Aorta (tissue), 5 donors: ENCODE measurements at regions of chr11 and their contacts with region 1.

Region 1: GRCh38 chr11:14942745-14943144 is 29.4 kb downstream of the CALCA start:
- DNase-seq: no peak
- ATAC-seq: no peak
- H3K4me3 ChIP-seq: no peak overlapping the region
- H3K27ac ChIP-seq: no peak overlapping the region
- H3K4me1 ChIP-seq: no peaks in the 10 kb centered on the region
- H3K27me3 ChIP-seq: no peaks in the 10 kb centered on the region

Region 2: GRCh38 chr11:14852571-14853177 is 90.1 kb before region 1 on chr11:
- intact Hi-C with region 1: no loop called
- DNase-seq: no peak
- ATAC-seq: no peak
- H3K4me3 ChIP-seq: no peak overlapping the region
- H3K27ac ChIP-seq: no peak overlapping the region
- H3K4me1 ChIP-seq: no peaks in the 10 kb centered on the region
- H3K27me3 ChIP-seq: no peaks in the 10 kb centered on the region

Region 3: GRCh38 chr11:15053191-15053685 is 110.5 kb after region 1 on chr11:
- intact Hi-C with region 1: loop called in 1 of 2 experiments (anchors 10 kb)
- DNase-seq: no peak
- ATAC-seq: no peak
- H3K4me3 ChIP-seq: no peak overlapping the region
- H3K27ac ChIP-seq: no peak overlapping the region
- H3K4me1 ChIP-seq: no peaks in the 10 kb centered on the region
- H3K27me3 ChIP-seq: no peaks in the 10 kb centered on the region

Region 4: GRCh38 chr11:15146271-15147003 is 203.7 kb after region 1 on chr11:
- intact Hi-C with region 1: no loop called
- DNase-seq: no peak
- ATAC-seq: no peak
- H3K4me3 ChIP-seq: no peak overlapping the region
- H3K27ac ChIP-seq: no peak overlapping the region
- H3K4me1 ChIP-seq: no peaks in the 10 kb centered on the region
- H3K27me3 ChIP-seq: no peaks in the 10 kb centered on the region

Region 5: DNA sequence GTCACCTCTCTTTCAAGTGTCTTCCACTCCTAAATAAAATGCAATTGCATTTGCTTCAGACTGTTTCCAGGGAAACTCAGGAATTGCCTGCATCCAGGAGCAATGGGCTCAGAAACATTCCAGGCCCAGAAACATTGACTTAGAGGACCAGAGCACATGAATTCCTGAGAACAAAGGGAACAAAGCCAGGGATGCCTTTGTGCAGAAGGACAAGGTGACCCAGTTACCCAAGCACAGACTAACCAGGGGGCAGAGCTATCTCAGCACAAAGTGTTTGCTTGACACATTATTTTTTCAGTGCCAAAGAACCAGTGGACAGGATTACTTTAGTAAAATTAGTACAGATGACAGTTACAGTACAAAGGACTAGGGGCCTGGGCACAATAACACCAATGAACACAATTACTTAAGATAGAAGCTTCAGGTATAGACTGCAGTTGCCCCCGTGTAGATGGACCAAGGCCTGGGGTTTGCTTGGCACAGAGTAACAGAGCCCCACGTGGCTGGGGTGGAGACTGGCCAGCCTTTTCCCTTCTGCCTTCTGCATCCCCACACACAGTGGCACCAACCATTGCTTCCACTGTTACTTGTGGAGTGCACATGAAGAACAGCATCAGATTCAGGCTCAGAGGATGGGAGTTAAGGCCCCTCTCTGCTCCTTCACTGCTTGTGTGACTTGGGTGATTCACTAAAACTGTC is 672.8 kb after region 1 on chr11:
- intact Hi-C with region 1: no loop called
- DNase-seq: no peak
- ATAC-seq: peak; percentile 7
- H3K4me3 ChIP-seq: no peak overlapping the region
- H3K27ac ChIP-seq: no peak overlapping the region
- H3K4me1 ChIP-seq: no peaks in the 10 kb centered on the region
- H3K27me3 ChIP-seq: no peaks in the 10 kb centered on the region